Sigmoid colon (tissue), 7 donors: ENCODE measurements at regions of chr3 and their contacts with region 1.

Region 1: GRCh38 chr3:172673210-172673679 is 37.6 kb downstream of the NCEH1 start:
- DNase-seq: peak; percentile 73
- H3K4me3 ChIP-seq: no peak overlapping the region
- H3K27ac ChIP-seq: no peak overlapping the region
- H3K4me1 ChIP-seq: peaks cover 0 to 29% (median 22%) of the 10 kb centered on the region in 4 donors
- H3K27me3 ChIP-seq: no peaks in the 10 kb centered on the region
- CTCF ChIP-seq: peak; percentile 20 to 65 (median 50)
- EP300 ChIP-seq: no peak
- POLR2A ChIP-seq: no peak

Region 2: DNA sequence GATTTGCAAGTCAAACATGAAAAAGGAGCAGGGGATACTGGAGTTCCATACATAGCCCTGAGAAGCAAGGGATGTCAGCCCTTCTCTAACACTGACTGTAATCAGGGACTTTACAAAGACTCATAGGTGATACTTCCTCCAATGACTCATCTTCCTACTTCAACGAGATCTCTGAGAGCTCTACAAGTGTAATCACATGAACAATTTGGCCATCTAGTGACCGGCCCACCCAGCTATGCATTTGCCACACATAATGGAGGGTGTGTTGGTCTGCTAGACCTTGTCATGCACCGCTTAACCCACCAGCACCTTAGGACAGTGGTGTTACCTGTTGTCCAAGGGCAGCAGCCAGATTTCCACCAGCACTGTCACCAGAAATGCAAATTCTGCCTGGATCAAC is 37.7 kb before region 1 on chr3:
- intact Hi-C with region 1: no loop called
- DNase-seq: no peak
- H3K4me3 ChIP-seq: no peak overlapping the region
- H3K27ac ChIP-seq: peak overlapping the region in 2 of 4 donors; percentile 11 to 30
- H3K4me1 ChIP-seq: peaks cover 0 to 20% (median 14%) of the 10 kb centered on the region in 4 donors
- H3K27me3 ChIP-seq: no peaks in the 10 kb centered on the region
- CTCF ChIP-seq: no peak
- EP300 ChIP-seq: no peak
- POLR2A ChIP-seq: no peak

Region 3: DNA sequence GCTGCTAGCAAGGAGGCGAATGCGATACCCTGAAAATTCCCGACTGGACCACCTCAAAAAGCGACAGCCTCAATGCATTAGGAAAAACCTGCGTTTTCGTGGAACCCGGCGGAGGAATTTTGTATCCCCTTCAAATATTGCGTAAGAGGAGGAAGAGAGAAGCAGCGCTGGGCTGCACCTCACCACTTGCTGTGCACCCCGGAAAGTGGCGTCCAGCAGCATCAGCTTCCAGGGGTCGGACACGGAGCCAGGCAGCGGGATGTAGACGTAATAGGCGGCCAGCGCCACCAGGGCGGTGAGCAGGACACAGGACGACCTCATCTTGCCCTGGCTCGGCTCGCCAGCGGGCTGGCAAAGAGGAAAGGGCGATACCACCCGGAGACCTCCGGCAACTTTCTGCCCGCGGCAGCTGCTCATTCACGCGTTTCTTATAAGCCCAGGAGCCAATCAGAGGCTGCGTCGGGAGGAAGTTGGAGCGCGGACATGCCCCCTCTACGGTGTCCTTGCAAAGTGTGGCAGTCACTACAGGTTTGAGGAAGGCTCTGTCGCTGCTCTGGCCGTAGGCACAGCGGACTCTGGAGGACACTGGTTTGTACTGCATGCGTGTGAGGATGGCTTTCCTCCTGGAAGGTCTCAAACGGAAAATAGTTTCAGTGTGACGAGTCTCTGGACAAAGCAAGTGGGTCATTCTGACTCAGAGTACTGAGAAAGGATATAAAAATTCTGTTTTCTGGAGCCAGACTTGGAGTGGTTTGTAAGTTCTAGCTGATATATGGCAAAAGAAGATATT is 37.6 kb after region 1 on chr3 and contains the start of gene NCEH1:
- intact Hi-C with region 1: loop called (anchors 2 kb)
- DNase-seq: peak; percentile 95
- H3K4me3 ChIP-seq: peak within 1 kb of the TSS; percentile 52 to 89 (median 66)
- H3K27ac ChIP-seq: peak within 1 kb of the TSS; percentile 88 to 95 (median 90)
- H3K4me1 ChIP-seq: peaks cover 0 to 21% (median 17%) of the 10 kb centered on the region in 4 donors
- H3K27me3 ChIP-seq: no peaks in the 10 kb centered on the region
- CTCF ChIP-seq: peak; percentile 53 to 82 (median 74)
- EP300 ChIP-seq: peak in 1 of 4 donors; percentile 19
- POLR2A ChIP-seq: peak; percentile 37 to 72
- total RNA-seq, gene NCEH1: 1.6 to 3.6 (median 2.4) TPM

Region 4: DNA sequence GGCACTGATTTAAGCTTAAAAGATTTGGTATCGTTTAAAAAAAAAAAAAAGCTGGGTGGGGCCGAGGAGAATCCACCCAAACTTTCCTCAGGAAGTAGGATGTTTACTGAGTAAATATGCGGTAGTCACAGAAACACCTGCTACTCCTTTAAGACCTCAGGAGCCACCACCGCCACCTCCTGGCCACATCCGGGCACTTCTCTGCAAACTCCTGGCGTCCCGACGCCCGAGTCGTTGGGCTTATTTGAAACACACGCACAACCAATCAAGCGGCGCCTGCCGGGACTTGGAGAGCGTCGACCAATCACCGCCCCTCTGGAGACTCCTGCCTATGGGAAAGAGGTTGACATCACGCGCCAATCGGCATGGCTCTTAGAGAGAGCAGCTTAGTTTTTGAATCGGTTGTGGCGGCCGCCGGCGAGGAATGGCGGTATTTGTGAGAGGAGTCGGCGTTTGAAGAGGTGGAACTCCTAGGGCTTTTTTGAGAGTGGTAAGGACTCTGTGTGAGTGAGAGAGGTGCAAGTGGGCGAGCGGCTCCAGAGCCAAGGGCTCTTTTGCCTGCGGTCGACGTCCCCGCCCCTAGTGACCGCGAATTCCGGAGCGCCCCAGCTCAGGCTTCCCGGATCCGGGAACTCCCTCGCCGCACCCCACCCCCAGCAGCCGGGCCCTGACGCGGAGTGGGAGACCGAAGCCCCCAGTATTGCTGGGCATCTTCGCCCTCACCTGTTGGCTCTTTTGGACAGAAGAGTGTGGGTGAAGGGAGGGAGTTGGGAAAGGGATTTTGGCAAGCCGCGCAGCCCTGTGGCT is 77.3 kb after region 1 on chr3 and contains the start of gene ECT2:
- intact Hi-C with region 1: loop called (anchors 1 kb)
- DNase-seq: peak; percentile 99
- H3K4me3 ChIP-seq: peak within 1 kb of the TSS; percentile 58 to 92 (median 72)
- H3K27ac ChIP-seq: peak within 1 kb of the TSS; percentile 67 to 81 (median 74)
- H3K4me1 ChIP-seq: peaks cover 0 to 18% (median 14%) of the 10 kb centered on the region in 4 donors
- H3K27me3 ChIP-seq: no peaks in the 10 kb centered on the region
- CTCF ChIP-seq: peak; percentile 31 to 66 (median 50)
- EP300 ChIP-seq: no peak
- POLR2A ChIP-seq: no peak
- total RNA-seq, gene ECT2: 3.3 to 21.9 (median 6.8) TPM